K562 (cell line): ENCODE measurements at regions of chr3 and their contacts with region 1.

Region 1: GRCh38 chr3:196073188-196073838 is 8.6 kb downstream of the TFRC start:
- DNase-seq: peak; percentile 41 to 75 (median 50)
- ATAC-seq: peak; percentile 88
- H3K4me3 ChIP-seq: no peak overlapping the region
- H3K27ac ChIP-seq: no peak overlapping the region
- H3K4me1 ChIP-seq: peaks cover 7 to 9% of the 10 kb centered on the region in 2 experiments; a peak in 3 of 5 replicates
- H3K27me3 ChIP-seq: no peaks in the 10 kb centered on the region
- CTCF ChIP-seq: peak; percentile 66 to 80 (median 74)
- EP300 ChIP-seq: no peak
- POLR2A ChIP-seq: peak; percentile 55
- RAD21 ChIP-seq: peak; percentile 67 to 75

Region 2: DNA sequence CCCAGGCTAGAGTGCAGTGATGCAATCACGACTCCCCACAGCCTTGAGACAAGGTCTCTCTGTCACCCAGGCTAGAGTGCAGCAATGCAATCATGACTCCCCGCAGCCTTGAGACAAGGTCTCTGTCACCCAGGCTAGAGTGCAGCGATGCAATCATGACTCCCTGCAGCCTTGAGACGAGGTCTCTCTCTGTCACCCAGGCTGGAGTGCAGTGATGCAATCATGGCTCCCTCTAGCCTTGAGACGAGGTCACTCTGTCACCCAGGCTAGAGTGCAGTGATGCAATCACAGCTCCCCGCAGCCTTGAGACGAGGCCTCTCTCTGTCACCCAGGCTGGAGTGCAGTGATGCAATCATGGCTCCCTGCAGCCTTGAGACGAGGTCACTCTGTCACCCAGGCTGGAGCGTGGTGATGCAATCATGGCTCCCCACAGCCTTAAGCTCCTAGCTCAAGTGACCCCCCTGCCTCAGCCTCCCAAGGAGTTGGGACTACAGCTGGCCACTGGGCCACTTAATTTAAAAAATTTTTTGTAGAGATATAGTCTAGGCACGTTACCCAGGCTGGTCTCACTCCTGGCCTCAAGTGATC is 17.5 kb before region 1 on chr3:
- CTCF ChIA-PET with region 1: no interaction called
- POLR2A ChIA-PET with region 1: interaction called, 11 read pairs
- in situ Hi-C with region 1: no loop called
- intact Hi-C with region 1: no loop called
- DNase-seq: peak in 1 of 4 experiments; percentile 69
- ATAC-seq: peak; percentile 79
- H3K4me3 ChIP-seq: no peak overlapping the region
- H3K27ac ChIP-seq: peak overlapping the region; percentile 63; the same call in 2 of the 3 replicates
- H3K4me1 ChIP-seq: no peaks in the 10 kb centered on the region; a peak in 1 of 5 replicates
- H3K27me3 ChIP-seq: no peaks in the 10 kb centered on the region
- CTCF ChIP-seq: no peak
- EP300 ChIP-seq: 0 out of 2 replicates have a peak, but pooled peaks have one; percentile 22
- POLR2A ChIP-seq: peak; percentile 14
- RAD21 ChIP-seq: 0 out of 4 replicates have a peak, but pooled peaks of 1 of the 2 experiments have one; percentile 13

Region 3: DNA sequence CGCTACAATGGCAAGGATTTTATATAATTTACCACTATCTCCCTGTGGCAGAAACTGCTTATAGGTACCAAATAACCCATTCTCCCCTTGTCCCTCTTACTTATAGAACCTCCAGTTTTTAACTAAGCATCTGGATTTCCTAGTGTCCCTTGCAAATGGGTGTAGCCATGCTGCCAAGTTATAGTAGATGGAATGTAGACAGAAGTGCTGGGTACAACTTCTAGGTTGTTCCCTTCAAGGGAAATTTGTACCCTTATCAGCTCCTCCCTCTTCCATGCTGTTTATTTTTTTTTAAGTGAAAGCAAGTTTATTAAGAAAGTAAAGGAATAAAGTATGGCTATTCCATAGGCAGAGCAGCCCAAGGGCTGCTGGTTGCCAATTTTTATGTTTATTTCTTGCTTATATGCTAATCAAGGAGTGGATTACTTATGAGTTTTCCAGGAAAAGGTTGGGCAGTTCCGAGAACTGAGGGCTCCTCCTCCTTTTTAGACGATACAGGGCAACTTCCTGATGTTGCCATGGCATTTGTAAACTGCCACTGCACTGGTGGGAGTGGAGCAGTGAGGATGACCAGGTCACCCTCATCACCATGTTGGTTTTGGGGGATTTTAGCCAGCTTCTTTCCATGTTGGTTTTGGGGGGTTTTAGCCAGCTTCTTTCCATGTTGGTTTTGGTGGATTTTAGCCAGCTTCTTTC is 305.0 kb after region 1 on chr3:
- CTCF ChIA-PET with region 1: no interaction called
- POLR2A ChIA-PET with region 1: no interaction called
- in situ Hi-C with region 1: no loop called
- intact Hi-C with region 1: no loop called
- DNase-seq: peak; percentile 29 to 89 (median 46)
- ATAC-seq: peak; percentile 84
- H3K4me3 ChIP-seq: no peak overlapping the region
- H3K27ac ChIP-seq: peak overlapping the region; percentile 48; the same call in 2 of the 3 replicates
- H3K4me1 ChIP-seq: peaks cover 0 to 10% of the 10 kb centered on the region in 2 experiments; a peak in 2 of 5 replicates
- H3K27me3 ChIP-seq: no peaks in the 10 kb centered on the region
- CTCF ChIP-seq: no peak
- EP300 ChIP-seq: 0 out of 2 replicates have a peak, but pooled peaks have one; percentile 11
- POLR2A ChIP-seq: no peak
- RAD21 ChIP-seq: no peak